Psoas muscle (tissue), 8 donors: ENCODE measurements at regions of chrX and their contacts with region 1.

Region 1: DNA sequence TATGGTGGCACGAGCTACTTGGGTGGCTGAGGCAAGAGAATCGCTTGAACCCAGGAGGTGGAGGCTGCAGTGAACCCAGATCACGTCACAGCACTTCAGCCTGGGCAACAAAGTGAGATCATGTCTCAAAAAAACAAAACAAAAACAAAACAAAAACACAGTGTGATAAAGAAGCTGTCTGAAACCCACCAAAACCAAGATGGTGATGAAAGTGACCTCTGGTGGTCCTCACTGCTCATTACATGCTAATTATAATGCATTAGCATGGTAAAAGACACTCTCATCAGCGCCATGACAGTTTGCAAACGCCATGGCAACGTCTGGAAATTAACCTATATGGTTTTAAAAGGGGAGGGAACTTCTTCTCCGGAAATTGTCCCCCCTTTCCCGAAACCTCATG is 29.4 kb upstream of the OPHN1 start:
- DNase-seq: no peak
- ATAC-seq: peak; percentile 27 to 78 (median 54)
- H3K4me3 ChIP-seq: no peak overlapping the region
- H3K27ac ChIP-seq: no peak overlapping the region
- H3K4me1 ChIP-seq: no peaks in the 10 kb centered on the region
- H3K27me3 ChIP-seq: peaks cover 0 to 3% (median 0%) of the 10 kb centered on the region in 3 donors
- CTCF ChIP-seq: peak; percentile 59

Region 2: DNA sequence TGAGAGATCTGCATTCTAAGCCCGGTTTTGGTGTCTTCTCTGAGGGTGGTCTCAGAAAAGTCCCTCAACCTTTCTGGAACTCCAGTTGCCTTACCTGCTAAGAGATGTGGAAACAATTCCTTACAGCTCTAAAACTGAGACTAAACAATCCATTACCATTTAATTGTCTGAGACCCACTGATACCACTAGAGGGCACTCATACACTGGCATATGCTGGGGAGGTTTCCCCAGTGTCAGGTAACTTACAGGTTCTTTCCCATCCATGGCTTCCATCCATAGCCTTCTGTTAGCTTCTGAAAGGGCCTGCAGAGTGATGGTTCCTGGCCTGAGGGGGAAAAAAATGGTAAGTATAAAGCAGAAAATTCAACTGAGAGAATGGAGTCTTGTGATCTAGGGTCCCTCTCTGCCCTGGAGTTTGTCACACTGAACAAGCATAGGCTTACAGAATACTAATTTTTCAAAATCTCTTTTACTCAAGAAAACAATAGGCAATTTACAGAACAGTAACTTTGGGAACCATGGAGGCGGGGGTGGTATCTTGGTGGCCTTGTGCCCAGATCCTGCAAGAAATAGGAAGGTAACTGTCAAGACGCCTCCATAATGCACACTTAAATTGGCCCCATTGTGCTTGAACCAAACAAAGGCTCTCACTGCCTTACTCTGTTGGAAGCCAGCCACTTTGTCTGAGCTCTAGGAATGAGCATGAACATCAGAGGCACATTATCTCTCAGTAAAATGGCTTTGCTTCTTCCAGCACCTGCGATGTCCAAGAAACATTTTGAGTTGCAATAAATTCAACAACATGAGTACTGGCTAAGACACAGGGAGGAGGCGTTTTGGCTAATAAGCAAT is 265.5 kb before region 1 on chrX:
- intact Hi-C with region 1: loop called (anchors 1 to 5 kb)
- DNase-seq: no peak
- ATAC-seq: peak; percentile 66 to 76 (median 73)
- H3K4me3 ChIP-seq: no peak overlapping the region
- H3K27ac ChIP-seq: no peak overlapping the region
- H3K4me1 ChIP-seq: no peaks in the 10 kb centered on the region
- H3K27me3 ChIP-seq: no peaks in the 10 kb centered on the region
- CTCF ChIP-seq: peak; percentile 69

Region 3: GRCh38 chrX:68440940-68441339 is 21.7 kb before region 1 on chrX:
- intact Hi-C with region 1: no loop called
- DNase-seq: peak in 1 of 2 donors; percentile 37
- ATAC-seq: no peak
- H3K4me3 ChIP-seq: no peak overlapping the region
- H3K27ac ChIP-seq: no peak overlapping the region
- H3K4me1 ChIP-seq: no peaks in the 10 kb centered on the region
- H3K27me3 ChIP-seq: peaks cover 0 to 6% (median 0%) of the 10 kb centered on the region in 3 donors
- CTCF ChIP-seq: no peak

Region 4: GRCh38 chrX:68498508-68499379 is 36.1 kb after region 1 on chrX and contains the start of gene YIPF6:
- intact Hi-C with region 1: loop called in 1 of 2 experiments (anchors 5 kb)
- DNase-seq: peak; percentile 80 to 89
- ATAC-seq: peak; percentile 93 to 99 (median 96)
- H3K4me3 ChIP-seq: peak within 1 kb of the TSS; percentile 85
- H3K27ac ChIP-seq: peak within 1 kb of the TSS; percentile 94
- H3K4me1 ChIP-seq: peaks cover 25% of the 10 kb centered on the region
- H3K27me3 ChIP-seq: peaks cover 0 to 11% (median 0%) of the 10 kb centered on the region in 3 donors
- CTCF ChIP-seq: no peak
- total RNA-seq, gene YIPF6: 30.4 to 43.3 (median 35.8) TPM

Region 5: DNA sequence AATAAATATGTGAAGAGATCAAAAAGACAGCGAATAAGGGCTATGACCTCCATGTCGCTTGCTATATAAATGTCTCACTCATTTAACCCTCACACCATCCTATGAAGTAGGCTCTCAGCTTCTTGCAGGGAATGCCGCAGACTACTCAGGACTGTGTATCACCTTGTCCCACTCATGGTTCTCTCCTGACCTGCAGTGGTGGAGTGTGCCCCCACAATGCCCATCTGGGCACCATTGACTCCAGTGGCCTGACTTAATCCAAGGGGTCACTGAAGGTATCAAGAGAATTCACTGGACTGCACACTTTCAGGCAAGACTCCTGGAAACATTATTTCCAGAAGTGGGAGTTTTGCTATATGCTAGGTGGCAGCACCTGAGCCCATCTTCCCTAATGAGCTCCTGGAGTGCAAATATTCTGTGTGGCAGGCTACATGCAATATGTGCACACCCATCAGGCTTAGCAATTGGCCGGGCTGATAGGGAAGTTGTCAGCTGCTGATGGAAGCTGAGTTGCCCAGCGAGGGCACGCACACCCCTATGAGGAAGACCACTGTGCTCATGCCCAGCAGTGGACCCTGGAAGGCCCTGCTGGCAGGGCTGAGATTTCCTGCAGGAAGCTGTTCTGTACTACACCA is 357.9 kb after region 1 on chrX:
- intact Hi-C with region 1: no loop called
- DNase-seq: no peak
- ATAC-seq: no peak
- H3K4me3 ChIP-seq: no peak overlapping the region
- H3K27ac ChIP-seq: no peak overlapping the region
- H3K4me1 ChIP-seq: no peaks in the 10 kb centered on the region
- H3K27me3 ChIP-seq: peaks cover 0 to 30% (median 0%) of the 10 kb centered on the region in 3 donors
- CTCF ChIP-seq: no peak

Region 6: DNA sequence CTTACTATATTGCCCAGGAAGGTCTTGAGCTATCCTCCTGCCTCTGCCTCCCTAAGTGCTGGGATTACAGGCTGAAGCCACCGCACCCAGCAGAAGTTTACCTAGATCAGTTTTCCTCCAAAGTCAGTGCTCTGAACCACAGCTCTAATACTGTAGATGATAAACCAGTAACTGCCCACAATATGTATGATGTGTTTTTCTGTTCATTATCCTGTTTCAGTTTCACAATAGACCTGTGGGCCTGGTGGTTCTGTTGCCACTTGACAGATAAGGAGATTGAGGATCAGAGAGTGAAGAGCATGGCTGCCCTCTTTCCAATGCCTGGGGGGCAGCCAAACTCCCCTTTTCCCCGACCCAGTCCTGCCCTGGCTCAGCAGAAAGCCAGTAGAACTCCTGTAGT is 453.1 kb after region 1 on chrX:
- intact Hi-C with region 1: no loop called
- DNase-seq: no peak
- ATAC-seq: no peak
- H3K4me3 ChIP-seq: no peak overlapping the region
- H3K27ac ChIP-seq: no peak overlapping the region
- H3K4me1 ChIP-seq: no peaks in the 10 kb centered on the region
- H3K27me3 ChIP-seq: peaks cover 0 to 15% (median 0%) of the 10 kb centered on the region in 3 donors
- CTCF ChIP-seq: no peak

Region 7: DNA sequence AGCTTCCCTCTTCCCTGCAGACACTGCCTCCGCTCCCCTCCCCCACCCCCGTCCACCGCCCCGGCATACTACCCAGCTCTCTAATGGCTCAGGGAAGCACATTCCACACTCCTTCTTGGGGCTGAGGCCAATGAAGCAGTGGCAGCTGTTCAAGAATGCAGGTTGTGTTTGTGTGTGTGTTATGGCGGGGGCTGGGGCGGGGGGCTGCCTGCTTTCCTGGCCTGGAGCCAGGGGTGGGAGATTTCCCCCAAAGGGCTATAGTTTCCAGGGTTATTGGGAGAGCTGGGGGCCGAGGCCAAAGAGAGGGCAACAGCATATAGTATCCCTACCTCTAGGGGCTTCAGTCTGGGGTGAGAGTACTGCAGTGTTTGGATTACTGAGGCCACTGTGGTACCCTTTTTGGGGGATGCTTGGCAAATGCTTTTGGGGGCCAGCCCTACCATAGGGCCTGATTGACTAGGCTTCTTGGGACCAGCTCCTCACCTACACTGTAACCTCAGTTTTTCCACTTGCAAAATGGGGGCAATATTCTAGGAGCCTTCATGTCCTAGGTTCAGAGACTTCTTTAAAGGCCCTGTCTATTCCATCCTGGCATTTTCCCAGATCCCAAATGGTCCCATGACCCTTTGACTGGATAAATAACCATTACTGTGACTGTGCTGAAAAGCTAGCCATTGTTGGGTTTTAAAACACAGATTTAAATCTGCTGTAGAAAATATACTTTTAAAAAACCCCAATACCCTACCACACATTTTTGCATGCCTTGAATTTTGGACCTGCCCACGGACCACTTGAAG is 515.8 kb after region 1 on chrX:
- intact Hi-C with region 1: no loop called
- DNase-seq: no peak
- ATAC-seq: no peak
- H3K4me3 ChIP-seq: no peak overlapping the region
- H3K27ac ChIP-seq: no peak overlapping the region
- H3K4me1 ChIP-seq: no peaks in the 10 kb centered on the region
- H3K27me3 ChIP-seq: no peaks in the 10 kb centered on the region
- CTCF ChIP-seq: no peak